ENCODE measurements at regions of chr3 and their contacts with region 1.

Region 1: GRCh38 chr3:186002884-186003472 is 65.2 kb upstream of the TRA2B start:
- DNase-seq: peak; percentile 31
- H3K4me3 ChIP-seq: no peak overlapping the region
- H3K27ac ChIP-seq: no peak overlapping the region
- H3K4me1 ChIP-seq: no peaks in the 10 kb centered on the region
- H3K27me3 ChIP-seq: no peaks in the 10 kb centered on the region
- CTCF ChIP-seq: peak; percentile 9 to 47
- POLR2A ChIP-seq: no peak

Region 2: GRCh38 chr3:186038360-186038759 is 35.4 kb after region 1 on chr3:
- CTCF ChIA-PET with region 1: no interaction called
- POLR2A ChIA-PET with region 1: no interaction called
- dilution Hi-C with region 1: no loop called
- intact Hi-C with region 1: loop called (anchors 2 kb)
- DNase-seq: no peak
- H3K4me3 ChIP-seq: no peak overlapping the region
- H3K27ac ChIP-seq: no peak overlapping the region
- H3K4me1 ChIP-seq: no peaks in the 10 kb centered on the region
- H3K27me3 ChIP-seq: peaks cover 0 to 4% of the 10 kb centered on the region in 2 experiments
- CTCF ChIP-seq: no peak
- POLR2A ChIP-seq: no peak

Region 3: DNA sequence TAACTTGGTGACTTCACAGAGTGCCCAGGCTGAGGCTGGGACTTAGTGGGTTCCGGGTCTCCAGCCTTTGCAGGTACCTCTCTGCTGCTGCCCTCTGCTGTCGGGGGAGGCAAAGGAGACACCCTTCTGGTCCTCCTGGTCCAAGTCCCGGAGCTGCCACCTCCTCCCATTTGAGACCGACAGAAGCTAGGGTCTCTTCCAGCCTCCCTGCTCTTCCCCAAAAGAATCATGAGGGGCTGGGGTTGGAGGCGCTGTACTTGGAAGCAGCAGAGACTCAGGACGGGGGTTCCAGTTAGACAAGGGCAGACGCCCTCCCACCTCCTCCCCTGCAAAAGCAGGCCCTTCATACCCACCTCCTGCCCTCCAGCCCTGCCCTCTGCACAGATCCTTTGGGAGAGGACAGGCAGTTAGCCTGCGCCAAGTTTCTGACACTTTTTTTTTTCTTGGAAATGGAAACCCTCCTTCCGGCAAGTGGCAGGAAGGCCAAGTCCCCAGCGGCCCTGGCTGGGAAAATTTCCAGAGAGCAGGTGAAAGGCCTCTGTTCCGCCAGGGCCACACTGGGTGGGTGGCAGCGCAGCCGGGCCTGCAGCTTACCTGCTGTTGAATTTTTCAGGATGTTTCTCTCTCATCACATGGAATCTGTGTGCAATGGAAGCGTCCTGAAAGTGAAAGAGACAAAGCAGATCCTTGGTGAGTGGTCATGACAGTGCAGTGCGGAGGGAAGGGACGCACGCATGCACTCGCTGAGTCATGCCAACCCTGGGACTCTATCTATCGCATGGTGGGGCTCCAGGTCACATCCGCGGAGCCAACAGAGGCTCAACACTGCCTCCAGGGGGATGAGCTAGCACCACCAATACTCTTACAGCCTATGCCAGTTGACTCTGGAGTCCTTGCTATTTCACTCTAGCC is 239.2 kb after region 1 on chr3:
- CTCF ChIA-PET with region 1: interaction called, 19 read pairs
- POLR2A ChIA-PET with region 1: no interaction called
- dilution Hi-C with region 1: no loop called
- intact Hi-C with region 1: loop called (anchors 1 kb)
- DNase-seq: peak; percentile 33
- H3K4me3 ChIP-seq: no peak overlapping the region
- H3K27ac ChIP-seq: no peak overlapping the region
- H3K4me1 ChIP-seq: no peaks in the 10 kb centered on the region
- H3K27me3 ChIP-seq: no peaks in the 10 kb centered on the region
- CTCF ChIP-seq: peak; percentile 24 to 55
- POLR2A ChIP-seq: no peak